ENCODE measurements at regions of chr14 and their contacts with region 1.

Region 1: DNA sequence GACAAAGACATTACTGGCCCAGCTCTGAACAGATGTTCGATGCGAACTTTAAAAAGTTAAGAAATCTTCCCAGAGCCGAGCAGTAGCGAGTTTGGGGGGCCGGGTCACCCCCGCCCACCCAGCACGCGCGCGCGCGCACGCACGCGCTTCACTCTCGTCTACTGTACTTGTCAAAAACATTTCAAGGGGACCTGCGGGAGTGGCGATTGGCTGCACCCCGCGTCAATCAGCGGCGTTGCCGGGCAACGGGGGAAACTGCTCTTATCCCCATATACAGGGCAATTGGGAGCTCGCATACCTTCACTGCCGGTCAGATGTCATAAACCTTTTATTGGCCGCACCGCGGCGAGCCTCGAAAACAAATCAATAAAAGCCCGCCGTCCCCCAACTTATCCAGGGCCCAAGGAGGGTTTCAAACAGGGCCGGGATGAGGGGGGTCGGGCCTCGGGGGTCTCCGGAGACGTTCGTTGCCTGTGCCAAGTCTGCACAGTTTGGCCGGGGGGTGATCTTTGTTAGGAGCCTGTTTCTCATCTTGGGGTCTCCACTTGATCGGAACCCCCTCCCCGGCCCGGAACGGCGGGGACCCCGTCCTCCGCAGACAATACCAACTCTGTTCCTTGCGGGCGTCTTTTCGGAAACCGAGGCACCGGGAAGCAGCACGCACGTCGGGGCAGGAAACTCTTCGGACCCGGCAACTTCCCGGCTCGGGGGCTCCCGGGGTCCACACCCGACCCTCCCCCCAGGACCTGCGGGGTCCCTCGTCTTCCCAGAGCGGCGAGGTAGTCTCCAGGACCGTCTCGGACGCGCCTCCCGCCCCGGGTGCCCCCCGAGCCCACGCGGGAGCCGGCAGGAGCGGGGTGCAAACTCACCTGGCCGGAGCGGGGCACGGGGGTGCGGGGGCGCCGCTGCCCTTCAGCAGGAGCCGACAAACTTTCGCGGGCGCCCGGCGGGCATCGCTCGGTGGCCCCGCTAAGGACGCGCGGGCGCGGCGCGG is 734 bp downstream of the FOXN3 start:
- DNase-seq: peak; percentile 98
- ATAC-seq: peak; percentile 82

Region 2: DNA sequence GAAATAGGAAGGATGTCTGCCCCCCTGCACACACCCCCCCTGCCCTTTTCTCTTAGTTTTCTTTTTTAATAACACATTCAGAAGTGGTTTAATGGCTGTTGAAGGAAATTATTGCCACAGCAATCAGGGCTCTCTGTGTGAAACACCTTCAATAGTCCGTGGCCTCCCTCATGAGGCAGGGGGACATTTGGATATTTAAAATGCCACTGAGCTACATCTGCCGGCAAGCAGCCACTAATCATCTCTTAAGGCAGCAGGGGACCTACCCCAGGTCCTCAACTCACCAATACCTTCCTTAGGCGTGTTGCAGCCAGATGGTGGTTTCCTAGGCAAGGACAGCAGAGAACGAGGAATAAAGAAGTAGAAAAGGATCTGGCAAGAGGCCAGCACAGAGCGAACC is 308.7 kb before region 1 on chr14:
- intact Hi-C with region 1: no loop called
- DNase-seq: no peak
- ATAC-seq: no peak

Region 3: GRCh38 chr14:89160437-89160836 is 255.9 kb before region 1 on chr14:
- intact Hi-C with region 1: no loop called
- DNase-seq: no peak
- ATAC-seq: no peak

Region 4: GRCh38 chr14:89185919-89186855 is 230.1 kb before region 1 on chr14:
- intact Hi-C with region 1: loop called (anchors 10 kb)
- DNase-seq: no peak
- ATAC-seq: peak; percentile 84

Region 5: GRCh38 chr14:89317051-89317691 is 99.1 kb before region 1 on chr14:
- intact Hi-C with region 1: no loop called
- DNase-seq: no peak
- ATAC-seq: no peak

Region 6: GRCh38 chr14:89669193-89669592 is 252.9 kb after region 1 on chr14:
- intact Hi-C with region 1: no loop called
- DNase-seq: peak; percentile 42
- ATAC-seq: peak; percentile 43